Ovary (tissue), 10 donors: ENCODE measurements at regions of chr19 and their contacts with region 1.

Region 1: GRCh38 chr19:51473009-51473707 is 5.2 kb upstream of the CEACAM18 start:
- DNase-seq: peak; percentile 53 to 79 (median 73)
- H3K4me3 ChIP-seq: no peak overlapping the region
- H3K27ac ChIP-seq: no peak overlapping the region
- H3K4me1 ChIP-seq: no peaks in the 10 kb centered on the region
- H3K27me3 ChIP-seq: no peaks in the 10 kb centered on the region
- CTCF ChIP-seq: peak; percentile 51 to 61 (median 59)
- EP300 ChIP-seq: no peak
- POLR2A ChIP-seq: no peak

Region 2: DNA sequence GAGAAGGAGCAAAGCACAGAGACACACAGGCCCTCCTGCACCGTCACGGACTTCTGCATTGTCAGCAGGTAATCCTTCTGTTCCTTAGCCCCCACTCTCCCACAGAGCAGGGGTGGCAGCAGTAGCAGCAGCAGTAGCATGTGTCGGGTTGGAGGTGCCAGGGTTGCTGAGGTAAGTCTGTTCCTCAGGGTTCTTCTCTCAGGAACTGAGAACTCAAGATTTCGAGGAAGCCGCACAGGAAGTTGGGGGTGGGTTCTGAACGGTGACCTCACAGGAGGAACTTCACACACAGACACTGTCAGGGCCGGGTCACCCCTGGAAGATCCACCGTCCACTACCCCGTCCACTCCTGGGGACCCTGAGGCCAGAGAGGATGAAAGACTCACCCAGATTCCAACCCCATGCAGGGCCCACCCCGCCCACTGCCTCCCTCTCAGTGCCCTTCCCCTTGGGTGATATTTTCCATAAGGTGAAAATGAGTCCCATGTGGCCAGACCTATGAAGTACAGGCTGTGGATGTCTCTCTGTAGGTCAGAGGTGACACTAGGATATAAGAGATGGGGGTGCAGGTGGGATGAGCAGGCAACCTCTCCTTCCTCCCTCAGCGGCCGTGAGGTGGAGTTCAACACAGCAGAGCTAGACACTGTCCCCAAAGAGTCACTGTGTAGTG is 28.6 kb after region 1 on chr19 and contains the start of gene SIGLEC12:
- intact Hi-C with region 1: no loop called
- DNase-seq: no peak
- H3K4me3 ChIP-seq: no peak within 1 kb of the TSS
- H3K27ac ChIP-seq: no peak within 1 kb of the TSS
- H3K4me1 ChIP-seq: no peaks in the 10 kb centered on the region
- H3K27me3 ChIP-seq: no peaks in the 10 kb centered on the region
- CTCF ChIP-seq: no peak
- EP300 ChIP-seq: no peak
- POLR2A ChIP-seq: no peak
- total RNA-seq, gene SIGLEC12: 0.23 to 0.25 TPM in 2 of 7 donors, not detected in the others

Region 3: GRCh38 chr19:51651216-51651846 is 178.2 kb after region 1 on chr19:
- intact Hi-C with region 1: loop called in 3 of 4 experiments (anchors 5 to 10 kb)
- DNase-seq: no peak
- H3K4me3 ChIP-seq: no peak overlapping the region
- H3K27ac ChIP-seq: no peak overlapping the region
- H3K4me1 ChIP-seq: no peaks in the 10 kb centered on the region
- H3K27me3 ChIP-seq: no peaks in the 10 kb centered on the region
- CTCF ChIP-seq: no peak
- EP300 ChIP-seq: no peak
- POLR2A ChIP-seq: no peak

Region 4: GRCh38 chr19:51784922-51785690 is 311.9 kb after region 1 on chr19:
- intact Hi-C with region 1: loop called in 1 of 4 experiments (anchors 10 kb)
- DNase-seq: peak in 1 of 5 donors; percentile 57
- H3K4me3 ChIP-seq: no peak overlapping the region
- H3K27ac ChIP-seq: no peak overlapping the region
- H3K4me1 ChIP-seq: peaks cover 2% of the 10 kb centered on the region
- H3K27me3 ChIP-seq: no peaks in the 10 kb centered on the region
- CTCF ChIP-seq: no peak
- EP300 ChIP-seq: no peak
- POLR2A ChIP-seq: no peak

Region 5: GRCh38 chr19:52237771-52238400 is 764.7 kb after region 1 on chr19:
- intact Hi-C with region 1: no loop called
- DNase-seq: peak; percentile 42 to 70 (median 66)
- H3K4me3 ChIP-seq: no peak overlapping the region
- H3K27ac ChIP-seq: no peak overlapping the region
- H3K4me1 ChIP-seq: no peaks in the 10 kb centered on the region
- H3K27me3 ChIP-seq: no peaks in the 10 kb centered on the region
- CTCF ChIP-seq: peak; percentile 70 to 83 (median 72)
- EP300 ChIP-seq: no peak
- POLR2A ChIP-seq: no peak